Right ventricle myocardium inferior (tissue), 1 donor: ENCODE measurements at regions of chr18 and their contacts with region 1.

Region 1: DNA sequence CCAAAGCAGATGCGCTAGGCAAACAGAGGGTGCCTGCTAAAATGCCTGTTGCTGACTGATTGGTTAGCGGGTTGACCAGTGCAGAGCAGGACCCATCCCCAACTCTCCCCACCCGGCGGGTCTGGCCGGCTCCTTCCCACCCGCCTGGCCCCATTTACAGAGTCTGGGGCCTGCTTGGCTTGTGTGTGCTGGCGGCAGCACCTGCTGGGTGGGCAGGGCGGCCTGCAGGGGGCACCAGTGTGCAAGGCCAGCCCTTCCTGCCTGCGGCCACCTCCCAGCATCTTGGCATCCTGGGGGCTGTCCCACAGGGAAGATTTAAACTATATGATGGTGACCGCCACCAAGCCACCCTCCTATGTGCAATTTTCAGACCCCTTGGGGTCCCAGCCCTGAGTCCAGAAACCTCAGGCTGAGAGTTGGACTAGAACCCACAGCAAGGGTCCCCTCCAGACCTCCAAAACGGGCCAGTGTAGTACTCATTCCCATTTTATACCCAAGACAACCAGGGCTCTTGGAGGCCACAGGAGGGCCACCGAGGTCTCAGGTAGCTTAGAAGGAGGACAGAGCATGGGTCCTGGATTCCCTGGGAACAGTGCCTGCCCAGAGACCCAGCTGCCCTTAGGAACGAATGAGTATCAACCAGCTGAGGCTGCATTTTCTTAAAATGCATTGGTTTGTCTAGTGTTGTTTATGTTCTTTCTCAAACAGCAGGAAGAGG is 173.6 kb downstream of the SMAD7 start:
- DNase-seq: no peak
- ATAC-seq: no peak

Region 2: DNA sequence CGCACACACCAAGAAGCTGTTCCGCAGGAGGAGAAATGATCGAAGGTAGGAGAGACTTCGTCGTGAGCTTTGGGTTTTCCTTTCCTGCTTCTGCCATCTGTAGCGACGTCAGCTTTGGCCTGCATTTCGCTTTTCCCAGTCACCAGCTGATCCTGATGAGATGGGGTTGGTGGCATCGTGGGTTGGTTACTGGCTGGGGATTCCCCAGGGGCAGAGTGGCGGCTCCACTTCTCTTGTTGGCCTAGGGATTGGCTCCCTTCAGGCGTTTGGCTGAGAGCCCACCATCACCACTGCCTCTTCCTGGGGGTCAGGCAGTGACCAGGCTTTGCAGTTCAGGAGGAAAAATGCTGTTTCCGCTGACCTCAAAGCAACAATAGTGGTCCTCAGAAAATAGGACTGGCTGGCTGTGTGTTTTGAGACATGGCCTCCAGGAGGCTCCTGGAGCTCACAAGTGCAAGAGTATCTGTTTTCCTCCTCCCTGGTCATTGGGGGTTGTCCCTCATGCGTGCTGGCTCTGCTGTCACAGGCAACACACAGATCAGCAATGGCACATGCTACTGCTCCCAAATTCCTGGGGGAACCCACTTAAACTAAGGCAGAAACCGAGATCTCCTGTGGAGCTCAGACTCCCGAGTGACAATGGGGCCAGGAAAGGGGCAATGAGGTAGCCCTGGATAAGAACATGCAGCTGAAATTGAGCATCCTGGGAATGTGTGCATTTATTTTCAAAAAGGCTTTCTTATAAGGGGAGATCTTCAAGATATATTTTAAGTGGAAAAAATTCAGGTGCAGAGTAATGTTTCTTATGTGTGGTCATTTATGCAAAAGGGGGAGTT is 65.3 kb before region 1 on chr18:
- intact Hi-C with region 1: loop called (anchors 5 kb)
- DNase-seq: no peak
- ATAC-seq: peak; percentile 53

Region 3: GRCh38 chr18:48827291-48828193 is 50.4 kb after region 1 on chr18:
- intact Hi-C with region 1: loop called (anchors 5 kb)
- DNase-seq: peak; percentile 25
- ATAC-seq: peak; percentile 49

Region 4: DNA sequence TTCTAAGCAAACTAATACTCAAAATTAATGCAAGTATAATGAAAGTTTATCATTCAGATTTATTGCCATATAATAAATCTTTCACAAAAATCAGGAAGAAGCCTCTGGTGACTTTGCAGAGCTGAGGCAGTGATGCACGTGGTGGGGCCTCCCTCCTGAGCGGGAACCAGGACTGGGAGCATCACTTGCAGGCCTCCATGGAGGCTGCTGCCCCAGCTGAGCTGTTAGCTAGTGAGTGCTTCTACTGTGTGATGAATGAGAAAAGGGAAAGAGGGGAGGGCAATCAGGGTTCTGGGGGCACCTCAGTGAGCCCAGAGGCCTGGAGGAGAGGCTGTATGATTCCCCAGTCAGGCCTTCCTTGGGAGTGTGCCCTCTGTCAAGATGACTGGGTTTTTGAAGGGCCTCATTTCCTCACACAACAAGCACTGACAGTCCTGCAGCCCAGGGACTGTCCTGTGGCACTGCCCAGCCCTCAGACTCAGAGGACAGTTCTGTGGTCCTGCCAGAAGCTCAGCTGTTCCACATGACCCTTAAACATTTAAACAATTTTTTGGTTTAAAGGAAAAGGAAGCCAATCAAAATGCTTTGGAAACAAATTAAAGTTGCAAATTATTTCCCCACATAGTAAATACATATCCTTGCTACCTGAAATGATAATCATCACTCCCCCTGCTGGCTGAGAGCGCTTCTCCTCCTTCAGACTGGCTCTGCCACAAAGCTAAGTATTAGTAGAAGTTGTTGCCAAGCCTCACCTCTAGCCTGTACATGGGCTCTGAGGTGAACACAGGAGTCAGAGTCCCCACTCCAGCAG is 264.5 kb after region 1 on chr18:
- intact Hi-C with region 1: loop called (anchors 5 kb)
- DNase-seq: no peak
- ATAC-seq: peak; percentile 75

Region 5: GRCh38 chr18:49178736-49179135 is 401.6 kb after region 1 on chr18:
- intact Hi-C with region 1: loop called (anchors 10 kb)
- DNase-seq: no peak
- ATAC-seq: no peak